AG04449 (cell line): ENCODE measurements at regions of chr1 and their contacts with region 1.

Region 1: DNA sequence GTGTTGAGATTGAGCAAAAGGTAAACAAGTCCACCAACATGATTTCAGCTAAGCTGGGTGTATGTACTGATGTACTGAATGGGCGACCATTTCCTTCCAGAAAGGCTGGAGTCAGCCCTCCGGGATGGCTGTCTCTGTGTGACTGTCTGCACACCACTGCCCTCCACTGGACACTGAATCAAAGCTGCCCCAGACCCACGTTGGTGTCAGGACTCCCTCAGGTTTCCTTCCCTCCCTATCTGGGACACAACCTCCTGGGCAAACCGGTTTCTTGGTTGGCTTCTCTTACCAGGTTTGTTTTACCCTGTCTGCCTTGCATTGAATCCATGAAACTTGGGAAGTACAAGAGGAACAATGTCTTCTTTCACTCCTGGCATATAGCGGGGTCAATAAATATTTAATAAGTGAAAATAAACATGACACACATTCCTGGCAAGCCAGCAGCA is 5.3 kb upstream of the SRP9 start:
- DNase-seq: no peak
- H3K4me3 ChIP-seq: no peak overlapping the region
- CTCF ChIP-seq: peak; percentile 90

Region 2: DNA sequence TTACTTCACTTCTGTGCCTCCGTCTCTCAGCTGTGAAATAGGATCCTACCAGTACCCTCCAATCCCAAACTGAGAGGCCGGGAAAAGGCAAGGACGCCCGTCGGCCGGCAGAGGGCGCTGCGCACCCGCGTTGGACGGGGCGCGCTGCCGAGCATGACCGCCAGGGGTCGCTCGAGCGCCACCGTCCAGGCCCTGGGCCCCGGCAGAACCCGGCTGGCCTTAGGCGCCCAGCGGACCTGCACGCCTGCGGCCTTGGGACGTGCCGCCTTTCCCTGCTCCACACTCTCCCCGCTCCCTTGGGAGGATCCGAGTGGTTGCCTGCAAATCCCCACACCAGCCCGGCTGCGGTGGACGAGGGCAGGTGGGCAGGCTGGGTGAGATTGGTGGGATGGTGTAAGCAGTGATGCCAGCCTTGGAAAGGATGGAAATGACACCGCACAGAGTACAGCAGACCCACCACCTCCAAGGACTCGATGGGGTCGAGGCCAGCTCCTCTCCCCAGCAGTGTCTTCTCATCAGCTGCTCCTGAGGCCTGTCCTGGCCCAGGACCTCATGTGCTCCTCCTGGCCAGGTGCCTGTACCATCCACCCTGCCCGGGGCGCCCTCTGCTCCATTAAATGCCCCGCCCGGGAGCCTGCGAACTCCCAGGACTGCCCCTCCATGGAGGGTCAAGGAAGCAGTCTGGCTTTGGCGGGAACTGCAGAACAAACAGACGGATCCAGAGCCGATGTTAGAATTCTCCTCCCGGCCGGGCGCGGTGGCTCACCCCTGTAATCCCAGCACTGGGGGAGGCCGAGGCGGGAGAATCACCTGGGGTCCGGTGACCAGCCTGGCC is 297.1 kb before region 1 on chr1:
- CTCF ChIA-PET with region 1: interaction called, 332 read pairs
- POLR2A ChIA-PET with region 1: no interaction called
- DNase-seq: no peak
- H3K4me3 ChIP-seq: no peak overlapping the region; the same call in 1 of the 2 replicates
- CTCF ChIP-seq: peak; percentile 100

Region 3: GRCh38 chr1:225533238-225533637 is 239.1 kb before region 1 on chr1:
- CTCF ChIA-PET with region 1: interaction called, 14 read pairs
- POLR2A ChIA-PET with region 1: no interaction called
- DNase-seq: no peak
- H3K4me3 ChIP-seq: no peak overlapping the region
- CTCF ChIP-seq: no peak

Region 4: DNA sequence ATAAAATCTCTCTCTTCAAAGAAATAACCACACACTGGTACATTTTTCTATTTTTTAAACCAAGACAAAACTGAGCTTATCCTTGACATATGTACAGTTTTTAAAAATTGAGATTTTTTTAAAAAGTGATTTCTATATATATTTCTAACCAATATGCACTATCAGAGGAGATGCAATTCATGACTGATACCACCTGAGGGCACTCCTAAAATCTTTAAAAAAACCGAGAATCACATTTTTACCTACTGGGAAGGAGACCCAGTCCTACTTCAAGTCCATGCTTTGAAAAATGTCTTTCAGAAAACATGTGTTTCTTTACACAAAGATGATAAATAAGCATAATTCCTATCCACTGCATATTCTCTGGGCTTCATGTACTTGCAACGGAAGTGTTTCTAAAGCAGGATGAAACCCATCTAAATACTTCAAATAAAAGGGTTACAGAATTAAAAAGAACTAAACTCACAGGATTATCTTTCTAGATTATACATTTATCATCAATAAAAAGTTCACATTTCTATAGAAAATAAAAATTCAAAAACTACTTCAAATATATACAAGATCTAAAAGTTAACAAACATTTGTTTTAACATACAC is 218.0 kb before region 1 on chr1:
- CTCF ChIA-PET with region 1: interaction called, 106 read pairs
- POLR2A ChIA-PET with region 1: no interaction called
- DNase-seq: no peak
- H3K4me3 ChIP-seq: no peak overlapping the region
- CTCF ChIP-seq: peak; percentile 14

Region 5: GRCh38 chr1:225578251-225578950 is 193.9 kb before region 1 on chr1:
- CTCF ChIA-PET with region 1: interaction called, 17 read pairs
- POLR2A ChIA-PET with region 1: no interaction called
- DNase-seq: no peak
- H3K4me3 ChIP-seq: no peak overlapping the region
- CTCF ChIP-seq: no peak

Region 6: GRCh38 chr1:225757927-225758656 is 14.3 kb before region 1 on chr1:
- CTCF ChIA-PET with region 1: interaction called, 31 read pairs
- POLR2A ChIA-PET with region 1: no interaction called
- DNase-seq: no peak
- H3K4me3 ChIP-seq: no peak overlapping the region
- CTCF ChIP-seq: no peak

Region 7: DNA sequence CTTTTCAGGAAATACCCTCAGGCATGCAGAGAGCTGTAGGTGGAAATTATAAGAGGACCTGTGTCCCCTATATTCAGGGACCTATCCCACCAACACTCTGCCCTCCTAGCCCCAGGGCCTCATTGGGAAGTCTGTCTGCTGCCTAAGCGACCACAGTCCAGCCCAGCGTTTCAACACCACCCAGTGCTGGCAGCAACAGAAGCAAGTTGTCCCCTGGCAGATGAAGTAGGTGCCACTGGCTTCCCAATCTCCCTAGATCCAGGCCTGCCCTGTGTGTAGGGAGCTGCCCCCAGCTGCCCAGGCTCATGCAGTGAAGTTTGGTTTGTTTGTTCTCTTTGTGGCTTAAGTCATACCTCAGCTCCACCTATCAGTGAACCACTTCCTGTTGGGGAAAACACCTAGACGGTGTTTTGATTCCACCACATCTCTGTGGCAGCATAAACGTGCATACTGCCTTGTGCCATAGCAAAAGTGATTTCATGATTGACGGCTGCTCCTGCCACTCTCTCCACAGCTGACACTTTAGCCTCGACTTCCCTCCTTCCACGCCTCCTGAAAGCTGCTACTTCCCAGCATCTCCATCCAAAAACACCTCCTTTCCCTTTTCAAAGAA is 124.7 kb after region 1 on chr1:
- CTCF ChIA-PET with region 1: no interaction called
- POLR2A ChIA-PET with region 1: no interaction called
- DNase-seq: no peak
- H3K4me3 ChIP-seq: no peak overlapping the region
- CTCF ChIP-seq: no peak